ENCODE measurements at regions of chr21 and their contacts with region 1.

Region 1: DNA sequence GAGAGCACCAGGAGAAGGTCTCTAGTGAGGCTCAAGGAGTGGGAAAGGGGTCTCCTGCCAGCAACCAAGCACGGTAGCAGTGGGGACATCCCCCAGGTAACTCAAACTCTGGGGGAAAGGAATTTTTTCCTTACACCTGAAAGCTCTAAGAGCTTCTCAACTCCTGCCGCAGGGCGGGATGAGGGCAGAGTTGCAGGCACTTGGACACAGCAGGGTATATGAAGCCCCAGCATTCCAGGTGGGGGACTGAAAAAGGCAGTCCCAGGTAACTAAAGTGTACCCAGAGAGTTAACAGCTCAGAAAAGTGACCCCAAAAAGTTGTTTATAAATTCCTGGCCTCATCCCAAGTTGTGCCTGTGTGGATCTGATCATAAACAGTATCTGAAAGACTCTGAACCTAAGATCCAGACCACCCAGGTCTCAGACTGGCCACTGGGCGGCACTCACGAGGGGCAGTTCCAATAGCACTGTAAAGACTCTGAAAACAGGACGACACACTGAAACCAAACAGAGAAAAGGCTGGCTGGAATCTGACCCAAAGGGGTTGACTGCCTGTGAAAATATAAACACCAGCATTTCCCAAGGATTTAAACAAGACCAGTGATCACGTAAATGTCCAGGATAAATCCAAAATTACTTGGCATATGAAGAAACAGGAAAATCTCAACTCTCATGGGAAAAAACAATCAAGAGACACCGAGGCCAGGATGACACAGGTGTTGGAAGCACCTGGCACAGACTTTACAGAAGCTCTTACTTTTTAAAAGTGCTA is 47.5 kb downstream of the HSF2BP start:
- DNase-seq: no peak
- ATAC-seq: peak; percentile 94
- H3K4me3 ChIP-seq: no peak overlapping the region
- H3K27ac ChIP-seq: no peak overlapping the region
- H3K4me1 ChIP-seq: peaks cover 13% of the 10 kb centered on the region; the same call in 1 of the 2 replicates
- H3K27me3 ChIP-seq: no peaks in the 10 kb centered on the region
- CTCF ChIP-seq: peak; percentile 70 to 97 (median 92)
- EP300 ChIP-seq: no peak
- POLR2A ChIP-seq: no peak
- RAD21 ChIP-seq: peak; percentile 72

Region 2: DNA sequence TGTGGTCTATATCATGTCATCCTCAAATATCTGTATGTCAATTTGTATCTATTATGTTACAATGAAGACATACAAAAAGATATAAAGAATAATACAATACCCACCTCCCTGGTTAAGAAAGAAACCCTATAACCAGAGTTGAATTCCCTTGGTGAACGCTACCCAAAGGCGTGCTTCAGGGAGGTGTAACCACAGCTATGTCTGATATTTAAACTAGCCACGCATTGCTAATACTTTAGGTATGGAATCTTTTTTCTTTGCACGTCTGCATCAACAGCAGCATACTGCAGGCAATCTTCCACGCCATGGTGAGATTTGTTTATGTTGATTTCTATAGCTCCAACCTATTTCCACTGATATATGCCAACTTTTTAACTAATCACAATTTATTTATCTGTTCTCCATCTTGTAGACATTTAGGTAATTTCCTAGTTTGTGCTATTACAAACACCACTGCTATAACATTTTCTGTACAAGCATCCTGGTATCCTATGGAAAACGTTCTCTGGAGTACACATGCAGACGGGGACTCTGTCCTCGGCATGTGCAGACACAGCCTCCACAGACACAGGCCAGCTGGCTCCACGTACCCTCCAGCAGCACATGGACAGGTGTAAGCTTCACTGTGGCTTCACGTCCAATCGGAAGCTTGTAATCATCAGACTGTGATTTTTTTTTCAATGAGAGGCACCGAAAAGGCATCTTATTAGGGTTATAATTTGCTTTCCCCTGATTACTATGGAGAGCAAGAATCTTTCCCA is 11.0 kb before region 1 on chr21:
- CTCF ChIA-PET with region 1: interaction called, 23 read pairs
- POLR2A ChIA-PET with region 1: no interaction called
- RAD21 ChIA-PET with region 1: no interaction called
- SMC1A ChIA-PET with region 1: interaction called, 4 read pairs
- in situ Hi-C with region 1: no loop called
- intact Hi-C with region 1: no loop called
- DNase-seq: no peak
- ATAC-seq: no peak
- H3K4me3 ChIP-seq: no peak overlapping the region
- H3K27ac ChIP-seq: no peak overlapping the region
- H3K4me1 ChIP-seq: no peaks in the 10 kb centered on the region
- H3K27me3 ChIP-seq: no peaks in the 10 kb centered on the region
- CTCF ChIP-seq: no peak
- EP300 ChIP-seq: no peak
- POLR2A ChIP-seq: no peak
- RAD21 ChIP-seq: no peak

Region 3: DNA sequence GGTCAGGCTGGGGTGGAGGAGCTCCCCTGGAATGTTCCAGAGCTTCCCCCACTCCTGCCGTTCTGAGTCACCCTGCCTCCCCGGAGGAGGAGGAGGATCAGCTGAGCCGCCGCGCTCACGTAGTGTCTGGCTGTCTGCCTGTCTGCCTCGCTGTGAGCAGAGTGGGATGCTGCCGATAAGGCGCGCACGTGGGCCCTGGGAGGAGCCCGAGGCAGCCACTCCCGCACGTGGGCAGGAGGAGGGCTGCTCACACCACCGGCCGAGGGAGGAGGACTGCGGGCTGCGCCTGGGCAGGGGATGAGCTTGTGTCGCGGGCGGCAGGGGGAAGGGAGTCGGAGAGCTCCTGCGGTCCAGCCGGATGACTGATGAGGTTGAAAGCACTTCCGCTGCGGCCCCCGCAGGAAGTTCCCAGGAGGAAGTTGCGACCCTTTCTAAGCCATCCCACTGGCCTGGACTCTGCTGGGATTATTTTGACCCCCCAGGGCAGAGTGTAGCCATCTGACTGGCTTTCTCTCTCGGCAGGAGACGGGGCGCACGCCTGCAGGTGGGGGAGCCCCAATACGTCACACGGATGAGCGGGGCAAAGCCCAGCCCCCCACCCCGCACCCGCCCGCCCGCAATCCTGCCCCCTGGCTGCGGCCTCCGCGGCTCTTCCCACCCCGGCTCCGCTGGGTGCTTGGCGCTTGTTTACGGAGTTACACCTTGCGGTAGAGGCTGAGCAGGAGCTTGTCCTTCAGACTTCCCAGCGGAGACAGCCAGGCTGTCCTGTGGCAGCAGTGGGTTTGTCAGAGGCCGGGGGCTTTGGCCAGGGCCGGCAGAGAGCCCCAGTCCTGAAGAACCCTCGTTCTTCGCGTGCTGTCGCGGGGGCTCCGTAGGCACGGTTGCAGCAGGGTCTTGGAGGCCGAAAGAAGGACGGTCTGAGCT is 116.9 kb after region 1 on chr21:
- CTCF ChIA-PET with region 1: no interaction called
- POLR2A ChIA-PET with region 1: no interaction called
- RAD21 ChIA-PET with region 1: no interaction called
- SMC1A ChIA-PET with region 1: no interaction called
- in situ Hi-C with region 1: no loop called
- intact Hi-C with region 1: loop called (anchors 5 kb)
- DNase-seq: peak; percentile 64
- ATAC-seq: peak; percentile 89
- H3K4me3 ChIP-seq: peak overlapping the region; percentile 80
- H3K27ac ChIP-seq: peak overlapping the region; percentile 49
- H3K4me1 ChIP-seq: peaks cover 47% of the 10 kb centered on the region
- H3K27me3 ChIP-seq: no peaks in the 10 kb centered on the region
- CTCF ChIP-seq: peak in 2 of 3 experiments; percentile 7 to 22; a peak in 2 of 6 replicates
- EP300 ChIP-seq: peak; percentile 16 to 57; a peak in 2 of 4 replicates
- POLR2A ChIP-seq: peak; percentile 85
- RAD21 ChIP-seq: no peak